ENCODE measurements at regions of chr5 and their contacts with region 1.

Region 1: GRCh38 chr5:123610665-123611405 is 98.9 kb downstream of the CSNK1G3 start:
- DNase-seq: peak; percentile 52 to 71
- H3K4me3 ChIP-seq: no peak overlapping the region
- H3K4me1 ChIP-seq: no peaks in the 10 kb centered on the region
- H3K27me3 ChIP-seq: no peaks in the 10 kb centered on the region

Region 2: DNA sequence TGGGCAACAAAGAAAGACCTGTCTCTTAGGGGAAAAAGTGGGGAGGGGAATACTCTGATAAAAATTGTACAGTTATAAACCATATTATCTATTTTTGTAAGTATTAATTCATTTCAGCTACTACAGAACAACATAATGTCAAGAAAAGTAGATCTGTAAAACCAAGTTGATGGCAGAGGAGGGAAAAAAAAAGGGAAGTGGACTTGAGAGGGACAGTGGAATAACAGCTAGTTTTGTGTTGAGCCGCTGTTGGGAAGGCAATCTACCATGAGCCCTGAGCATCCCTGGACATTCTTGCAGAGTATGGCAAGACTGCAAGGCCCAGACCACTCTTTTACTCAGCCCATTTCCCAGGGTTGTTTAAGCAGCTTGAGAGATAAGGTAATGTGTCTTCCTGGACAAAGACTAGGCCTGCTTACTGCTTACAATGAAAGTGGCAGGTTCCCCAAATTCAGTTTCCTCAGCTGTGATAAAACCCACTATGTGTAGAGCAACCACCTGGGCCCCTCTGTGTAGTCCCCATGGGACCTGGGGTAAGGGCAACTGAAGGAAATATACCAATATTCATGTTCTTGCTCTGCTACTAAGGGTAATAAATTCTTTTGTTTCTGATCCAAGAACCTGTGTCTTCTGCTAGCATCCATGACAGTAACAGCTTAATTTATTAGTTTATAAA is 212.6 kb before region 1 on chr5:
- in situ Hi-C with region 1: loop called (anchors 25 kb)
- DNase-seq: no peak
- H3K4me3 ChIP-seq: no peak overlapping the region
- H3K4me1 ChIP-seq: peaks cover 13% of the 10 kb centered on the region
- H3K27me3 ChIP-seq: no peaks in the 10 kb centered on the region